K562 (cell line): ENCODE measurements at regions of chr19 and their contacts with region 1.

Region 1: GRCh38 chr19:36103626-36104552 is 7.1 kb upstream of the OVOL3 start:
- DNase-seq: peak; percentile 69 to 90 (median 82)
- ATAC-seq: peak; percentile 93
- H3K4me3 ChIP-seq: no peak overlapping the region
- H3K27ac ChIP-seq: peak overlapping the region; percentile 31; the same call in 1 of the 3 replicates
- H3K4me1 ChIP-seq: peaks cover 15 to 54% of the 10 kb centered on the region in 2 experiments; a peak in 4 of 5 replicates
- H3K27me3 ChIP-seq: no peaks in the 10 kb centered on the region
- CTCF ChIP-seq: peak in 2 of 3 experiments; percentile 9 to 14; a peak in 1 of 6 replicates
- EP300 ChIP-seq: no peak; the same call in 1 of the 2 replicates
- POLR2A ChIP-seq: no peak
- RAD21 ChIP-seq: no peak

Region 2: DNA sequence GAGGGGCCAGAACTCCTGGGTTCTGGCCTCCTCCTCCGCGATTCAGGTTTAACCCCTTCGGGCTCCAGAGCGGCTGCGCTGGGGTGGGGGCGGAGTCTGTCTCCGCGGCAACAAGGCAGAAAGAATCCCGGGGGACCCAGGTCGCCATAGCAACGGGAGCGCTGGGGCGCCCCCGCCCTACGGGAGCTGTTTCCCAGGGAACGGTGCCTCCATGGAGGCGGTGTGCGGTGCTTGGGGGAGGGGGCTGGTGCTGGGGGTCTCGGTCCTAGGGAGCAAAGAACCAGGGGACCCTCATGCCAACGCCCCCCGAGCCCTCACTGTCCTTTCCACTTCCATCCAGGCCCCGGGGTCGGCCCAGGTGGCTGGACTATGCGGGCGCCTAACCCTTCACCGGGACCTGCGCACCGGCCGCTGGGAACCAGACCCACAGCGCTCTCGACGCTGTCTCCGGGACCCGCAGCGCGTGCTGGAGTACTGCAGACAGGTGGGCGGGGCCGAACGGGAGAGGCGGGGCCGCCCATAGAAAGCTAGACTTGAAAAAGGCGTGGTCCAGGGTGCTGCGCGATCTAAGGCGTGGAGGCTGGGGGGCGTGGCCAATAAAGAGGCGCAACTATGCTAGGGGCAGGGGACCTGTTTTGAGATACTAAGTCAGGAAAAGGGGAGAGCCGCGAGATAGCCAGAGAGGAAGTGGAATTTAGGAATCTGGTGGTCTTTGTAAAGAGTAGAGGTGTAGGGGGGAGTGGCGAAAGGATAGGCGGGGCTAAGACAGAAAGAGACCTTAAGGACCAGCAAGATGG is 234.4 kb before region 1 on chr19:
- CTCF ChIA-PET with region 1: no interaction called
- POLR2A ChIA-PET with region 1: no interaction called
- in situ Hi-C with region 1: no loop called
- intact Hi-C with region 1: no loop called
- DNase-seq: peak; percentile 87 to 97 (median 89)
- ATAC-seq: peak; percentile 95
- H3K4me3 ChIP-seq: peak overlapping the region; percentile 45
- H3K27ac ChIP-seq: no peak overlapping the region; the same call in 2 of the 3 replicates
- H3K4me1 ChIP-seq: peaks cover 20 to 46% of the 10 kb centered on the region in 2 experiments
- H3K27me3 ChIP-seq: peaks cover 0 to 6% of the 10 kb centered on the region in 2 experiments; a peak in 2 of 5 replicates
- CTCF ChIP-seq: 0 out of 6 replicates have a peak, but pooled peaks of 1 of the 3 experiments have one; percentile 7
- EP300 ChIP-seq: no peak
- POLR2A ChIP-seq: no peak
- RAD21 ChIP-seq: no peak

Region 3: DNA sequence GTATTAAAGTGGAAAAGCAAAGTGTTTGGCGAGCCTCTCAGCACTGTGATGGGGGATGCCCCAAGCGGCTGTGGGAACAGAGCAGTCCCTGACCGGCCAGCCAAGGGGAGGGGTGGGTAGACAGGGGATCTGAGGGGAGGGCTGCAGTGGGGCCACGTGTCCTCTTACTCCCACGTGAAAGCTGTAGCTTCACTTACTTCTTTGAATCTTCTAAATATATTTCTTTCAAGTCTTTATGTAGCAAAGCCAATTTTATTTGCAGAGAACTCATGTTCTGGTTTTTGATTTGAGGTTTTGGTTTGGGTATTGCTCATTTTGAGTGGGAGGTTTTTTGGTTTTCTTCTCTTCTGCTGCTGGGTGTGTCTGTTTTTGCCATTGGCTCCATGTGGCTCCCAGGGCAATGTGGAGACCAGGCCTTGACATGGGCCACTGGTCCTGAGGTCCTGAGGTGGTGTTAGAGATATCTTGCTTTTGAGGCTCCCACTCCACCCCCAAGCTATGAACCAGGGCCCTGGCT is 10.7 kb before region 1 on chr19:
- CTCF ChIA-PET with region 1: no interaction called
- POLR2A ChIA-PET with region 1: interaction called, 10 read pairs
- in situ Hi-C with region 1: no loop called
- intact Hi-C with region 1: no loop called
- DNase-seq: no peak
- ATAC-seq: no peak
- H3K4me3 ChIP-seq: no peak overlapping the region
- H3K27ac ChIP-seq: no peak overlapping the region
- H3K4me1 ChIP-seq: no peaks in the 10 kb centered on the region
- H3K27me3 ChIP-seq: no peaks in the 10 kb centered on the region
- CTCF ChIP-seq: no peak
- EP300 ChIP-seq: no peak
- POLR2A ChIP-seq: no peak
- RAD21 ChIP-seq: no peak

Region 4: GRCh38 chr19:36331353-36332228 is 227.7 kb after region 1 on chr19:
- CTCF ChIA-PET with region 1: no interaction called
- POLR2A ChIA-PET with region 1: no interaction called
- in situ Hi-C with region 1: no loop called
- intact Hi-C with region 1: no loop called
- DNase-seq: peak; percentile 18 to 33 (median 26)
- ATAC-seq: peak; percentile 69
- H3K4me3 ChIP-seq: peak overlapping the region; percentile 33
- H3K27ac ChIP-seq: no peak overlapping the region; the same call in 2 of the 3 replicates
- H3K4me1 ChIP-seq: peaks cover 0 to 4% of the 10 kb centered on the region in 2 experiments; a peak in 2 of 5 replicates
- H3K27me3 ChIP-seq: no peaks in the 10 kb centered on the region
- CTCF ChIP-seq: no peak
- EP300 ChIP-seq: no peak
- POLR2A ChIP-seq: no peak
- RAD21 ChIP-seq: no peak